ENCODE measurements at regions of chr2 and their contacts with region 1.

Region 1: GRCh38 chr2:95076784-95077529 is 44.7 kb downstream of the MRPS5 start:
- DNase-seq: peak; percentile 76
- H3K27ac ChIP-seq: no peak overlapping the region
- CTCF ChIP-seq: peak; percentile 87

Region 2: DNA sequence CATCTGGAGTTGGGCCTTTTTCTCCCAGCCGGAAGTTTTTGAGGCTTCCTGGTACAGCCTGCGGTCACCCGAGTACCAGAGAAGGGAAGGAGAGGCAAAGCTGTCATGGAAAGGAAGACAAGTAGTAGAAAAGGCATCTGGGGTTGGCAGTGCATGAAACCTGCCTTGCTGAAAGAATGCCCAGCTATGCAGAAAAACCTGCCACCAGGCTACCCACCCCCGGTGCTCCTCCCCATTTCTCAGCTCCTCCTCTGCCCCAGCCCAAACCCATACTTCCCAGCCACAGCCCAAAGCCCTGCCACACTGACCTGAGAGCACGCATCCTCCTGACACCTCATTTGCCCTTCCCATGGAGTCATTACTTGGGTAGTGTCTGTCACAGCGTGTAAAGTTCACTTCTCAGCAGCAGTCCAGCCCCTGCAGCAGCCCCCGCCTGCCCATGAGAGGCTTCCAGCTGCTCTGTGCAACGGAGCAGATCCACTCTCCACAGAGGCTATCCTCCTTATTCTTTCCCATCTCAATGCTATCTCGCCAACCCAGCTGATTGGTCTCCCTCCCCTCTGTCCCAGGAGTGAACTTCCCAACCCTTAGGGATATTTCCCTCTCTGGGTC is 91.9 kb before region 1 on chr2:
- CTCF ChIA-PET with region 1: interaction called, 11 read pairs
- POLR2A ChIA-PET with region 1: no interaction called
- DNase-seq: no peak
- H3K27ac ChIP-seq: no peak overlapping the region
- CTCF ChIP-seq: no peak

Region 3: DNA sequence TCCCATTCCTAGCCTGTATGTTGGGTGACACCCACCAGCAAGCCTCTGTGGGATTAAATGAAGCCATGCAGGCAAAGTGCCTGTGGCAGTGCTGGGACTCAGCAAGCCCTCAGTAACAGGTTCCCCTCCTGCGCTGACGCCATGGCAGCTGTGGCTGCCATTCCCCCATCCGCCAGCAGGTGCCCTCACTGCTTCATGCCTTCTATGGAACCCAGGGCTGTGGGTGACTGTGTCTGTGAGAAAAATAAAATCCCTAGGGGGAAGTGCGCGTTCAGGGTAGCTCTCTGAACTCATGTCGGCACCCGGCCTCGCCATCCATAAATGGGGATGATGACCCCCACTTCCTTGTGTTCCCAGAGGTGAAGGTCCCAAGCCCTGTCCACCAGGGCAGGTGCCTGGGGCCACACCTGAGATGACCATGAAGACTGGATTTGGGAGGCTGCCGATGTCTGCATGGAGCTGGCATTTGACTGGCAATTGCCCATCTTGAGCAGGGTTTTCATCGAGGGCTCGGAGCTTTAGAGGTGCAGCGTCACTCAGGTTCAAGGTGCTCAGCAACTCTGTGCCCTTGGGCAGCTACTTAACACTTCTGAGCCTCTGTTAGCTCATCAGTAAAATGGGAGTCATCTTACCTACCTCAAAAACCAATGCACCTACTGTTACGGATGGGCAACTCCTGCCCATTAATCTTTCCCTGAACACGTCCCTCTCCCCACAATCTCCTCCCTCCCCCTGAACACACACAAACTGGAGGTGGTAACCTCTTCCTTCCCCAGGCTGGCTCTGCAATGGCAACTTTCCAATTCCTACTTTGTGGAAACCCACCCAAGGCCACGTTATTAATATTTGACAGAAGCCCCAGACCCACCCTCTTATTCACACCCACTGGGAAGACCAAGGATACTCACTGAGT is 54.4 kb before region 1 on chr2:
- CTCF ChIA-PET with region 1: interaction called, 72 read pairs
- POLR2A ChIA-PET with region 1: no interaction called
- DNase-seq: peak; percentile 61
- H3K27ac ChIP-seq: no peak overlapping the region
- CTCF ChIP-seq: peak; percentile 77

Region 4: GRCh38 chr2:95062242-95063085 is 14.5 kb before region 1 on chr2:
- CTCF ChIA-PET with region 1: interaction called, 12 read pairs
- POLR2A ChIA-PET with region 1: no interaction called
- DNase-seq: no peak
- H3K27ac ChIP-seq: no peak overlapping the region
- CTCF ChIP-seq: no peak

Measured in RWPE1 (cell line).